ENCODE measurements at regions of chr22 and their contacts with region 1.

Region 1: GRCh38 chr22:25100948-25101347 is 98.7 kb upstream of the CRYBB3 start:
- DNase-seq: no peak
- ATAC-seq: no peak
- H3K4me3 ChIP-seq: no peak overlapping the region
- H3K4me3 Mint-ChIP-seq: no peak overlapping the region
- H3K27ac ChIP-seq: no peak overlapping the region
- H3K27ac Mint-ChIP-seq: no peak overlapping the region
- H3K4me1 ChIP-seq: no peaks in the 10 kb centered on the region
- H3K4me1 Mint-ChIP-seq: peaks cover 0 to 2% (median 0%) of the 10 kb centered on the region in 3 donors
- H3K27me3 ChIP-seq: no peaks in the 10 kb centered on the region
- H3K27me3 Mint-ChIP-seq: no peaks in the 10 kb centered on the region

Region 2: GRCh38 chr22:24768537-24769374 is 332.2 kb before region 1 on chr22:
- CTCF ChIA-PET with region 1: no interaction called
- POLR2A ChIA-PET with region 1: no interaction called
- DNase-seq: peak in 25 of 35 experiments; percentile 4 to 65 (median 23)
- ATAC-seq: peak in 3 of 4 experiments; percentile 48 to 67 (median 54)
- H3K4me3 ChIP-seq: no peak overlapping the region
- H3K4me3 Mint-ChIP-seq: no peak overlapping the region
- H3K27ac ChIP-seq: no peak overlapping the region
- H3K27ac Mint-ChIP-seq: no peak overlapping the region
- H3K4me1 ChIP-seq: no peaks in the 10 kb centered on the region
- H3K4me1 Mint-ChIP-seq: no peaks in the 10 kb centered on the region
- H3K27me3 ChIP-seq: peaks cover 0 to 26% of the 10 kb centered on the region in 2 experiments
- H3K27me3 Mint-ChIP-seq: peaks cover 5 to 15% of the 10 kb centered on the region in 2 donors

Region 3: DNA sequence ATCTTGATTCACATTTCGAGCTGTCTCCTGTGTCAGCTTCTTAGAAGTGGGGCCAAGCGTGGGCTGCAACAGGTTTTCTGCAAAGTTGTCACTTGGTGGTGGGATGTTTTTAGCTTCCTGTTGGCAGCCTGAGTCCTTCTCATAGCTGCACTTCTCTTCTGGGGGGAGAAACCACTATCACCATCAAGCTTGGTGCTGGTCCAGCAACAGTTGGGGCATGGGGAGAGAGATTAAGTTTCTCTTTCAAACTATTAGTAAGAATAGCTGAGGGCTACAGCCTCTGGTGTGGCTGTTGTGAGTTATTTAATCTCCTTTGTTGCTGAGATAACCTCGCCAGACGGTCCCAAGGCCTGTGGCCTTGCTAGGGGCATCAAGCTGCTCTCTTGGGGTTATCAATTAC is 24.6 kb before region 1 on chr22:
- CTCF ChIA-PET with region 1: no interaction called
- POLR2A ChIA-PET with region 1: interaction called in 1 of 2 experiments, 13 read pairs
- DNase-seq: peak in 11 of 35 experiments; percentile 5 to 59 (median 24)
- ATAC-seq: peak; percentile 48 to 77 (median 66)
- H3K4me3 ChIP-seq: no peak overlapping the region
- H3K4me3 Mint-ChIP-seq: peak overlapping the region; percentile 50 to 76 (median 54)
- H3K27ac ChIP-seq: peak overlapping the region; percentile 36
- H3K27ac Mint-ChIP-seq: peak overlapping the region; percentile 85
- H3K4me1 ChIP-seq: peaks cover 19 to 78% of the 10 kb centered on the region in 2 experiments
- H3K4me1 Mint-ChIP-seq: peaks cover 63 to 76% (median 68%) of the 10 kb centered on the region in 3 donors
- H3K27me3 ChIP-seq: no peaks in the 10 kb centered on the region
- H3K27me3 Mint-ChIP-seq: no peaks in the 10 kb centered on the region

Measured in T-cell (primary cell).